GM23248 (cell line): ENCODE measurements at regions of chr3 and their contacts with region 1.

Region 1: GRCh38 chr3:15557511-15557946 is 36.0 kb upstream of the COLQ start:
- DNase-seq: peak; percentile 85
- H3K4me3 ChIP-seq: no peak overlapping the region
- H3K27ac ChIP-seq: no peak overlapping the region
- H3K4me1 ChIP-seq: 0 out of 2 replicates have a peak, but pooled peaks cover 5% of the 10 kb centered on the region
- H3K27me3 ChIP-seq: no peaks in the 10 kb centered on the region

Region 2: DNA sequence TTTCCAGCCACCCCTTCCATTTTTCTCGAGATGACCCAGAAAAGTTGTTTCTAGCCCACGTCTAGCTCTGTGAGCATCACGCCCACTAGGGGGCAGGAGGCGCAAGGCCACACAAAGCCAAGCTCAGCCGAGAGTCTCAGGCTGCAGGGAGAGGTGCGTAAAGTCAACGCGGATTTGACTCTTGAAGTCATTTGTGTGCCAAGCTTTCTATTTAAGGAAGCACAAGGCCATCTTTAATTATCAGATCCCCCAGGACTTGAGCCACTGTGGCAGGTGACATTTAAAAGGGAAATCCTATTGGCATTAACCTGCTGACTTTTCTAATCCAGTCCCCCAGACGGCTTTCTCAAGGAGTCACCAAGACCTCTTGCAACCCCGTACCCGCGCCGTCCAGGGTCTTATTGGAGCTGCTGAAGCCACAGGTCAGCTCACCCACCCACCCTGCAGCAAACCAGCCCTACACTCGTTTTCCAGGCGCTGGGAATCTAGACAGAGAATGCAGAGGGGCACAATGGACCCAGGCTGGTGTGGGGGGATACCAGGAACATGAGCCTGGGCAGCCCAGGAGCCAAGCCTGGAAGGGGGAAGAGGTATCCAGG is 289.4 kb before region 1 on chr3:
- in situ Hi-C with region 1: loop called (anchors 25 kb)
- DNase-seq: peak; percentile 94
- H3K4me3 ChIP-seq: no peak overlapping the region
- H3K27ac ChIP-seq: peak overlapping the region; percentile 92
- H3K4me1 ChIP-seq: peaks cover 24% of the 10 kb centered on the region
- H3K27me3 ChIP-seq: no peaks in the 10 kb centered on the region

Region 3: DNA sequence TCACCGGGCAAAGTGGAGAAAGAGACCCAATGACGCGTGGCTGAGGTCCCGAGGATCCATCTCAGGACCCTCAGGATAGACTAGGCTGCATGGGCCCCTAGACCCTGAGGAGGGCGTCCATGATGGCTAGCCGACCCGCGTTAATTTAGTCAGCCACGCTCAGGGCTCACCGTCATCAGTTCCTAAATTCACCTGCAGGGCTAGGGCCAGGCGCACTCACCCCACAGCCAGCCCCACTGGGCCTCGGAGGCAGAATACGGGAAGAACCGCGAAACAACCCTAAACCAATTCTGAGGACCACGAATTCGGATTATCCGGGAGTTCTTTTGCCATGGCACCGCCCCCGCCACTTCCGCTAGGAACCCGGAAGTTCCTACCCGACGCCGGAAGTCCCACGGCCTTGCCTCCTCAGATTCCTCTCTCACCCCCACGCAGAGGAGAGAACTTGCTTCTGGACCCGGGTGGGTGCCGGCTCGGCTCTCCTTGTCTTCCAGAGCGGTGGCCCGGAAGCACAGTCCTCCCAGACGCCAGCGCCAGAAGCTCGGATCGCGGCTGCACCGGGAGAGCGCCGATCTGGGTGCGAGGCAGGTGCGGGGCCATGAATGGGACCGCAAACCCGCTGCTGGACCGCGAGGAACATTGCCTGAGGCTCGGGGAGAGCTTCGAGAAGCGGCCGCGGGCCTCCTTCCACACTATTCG is 130.2 kb before region 1 on chr3 and contains the starts of genes EAF1 and METTL6:
- in situ Hi-C with region 1: loop called (anchors 10 kb)
- DNase-seq: peak; percentile 91
- H3K4me3 ChIP-seq: peak within 1 kb of the TSS; percentile 99
- H3K27ac ChIP-seq: peak within 1 kb of the TSS; percentile 92
- H3K4me1 ChIP-seq: peaks cover 19% of the 10 kb centered on the region
- H3K27me3 ChIP-seq: no peaks in the 10 kb centered on the region
- total RNA-seq, gene EAF1: 16.9 and 20.9 TPM in 2 replicates
- total RNA-seq, gene METTL6: 24.2 and 30.9 TPM in 2 replicates